Activated B cell treated with CpG ODN at 0.5 μM for 24 hours (primary cell): ENCODE measurements at regions of chr4 and their contacts with region 1.

Region 1: GRCh38 chr4:78824001-78824400 is 47.9 kb downstream of the BMP2K start:
- DNase-seq: no peak
- ATAC-seq: no peak
- H3K4me3 Mint-ChIP-seq: no peak overlapping the region
- H3K27ac Mint-ChIP-seq: peak overlapping the region; percentile 30
- H3K4me1 Mint-ChIP-seq: peaks cover 49% of the 10 kb centered on the region
- H3K27me3 Mint-ChIP-seq: no peaks in the 10 kb centered on the region
- CTCF ChIP-seq: no peak

Region 2: DNA sequence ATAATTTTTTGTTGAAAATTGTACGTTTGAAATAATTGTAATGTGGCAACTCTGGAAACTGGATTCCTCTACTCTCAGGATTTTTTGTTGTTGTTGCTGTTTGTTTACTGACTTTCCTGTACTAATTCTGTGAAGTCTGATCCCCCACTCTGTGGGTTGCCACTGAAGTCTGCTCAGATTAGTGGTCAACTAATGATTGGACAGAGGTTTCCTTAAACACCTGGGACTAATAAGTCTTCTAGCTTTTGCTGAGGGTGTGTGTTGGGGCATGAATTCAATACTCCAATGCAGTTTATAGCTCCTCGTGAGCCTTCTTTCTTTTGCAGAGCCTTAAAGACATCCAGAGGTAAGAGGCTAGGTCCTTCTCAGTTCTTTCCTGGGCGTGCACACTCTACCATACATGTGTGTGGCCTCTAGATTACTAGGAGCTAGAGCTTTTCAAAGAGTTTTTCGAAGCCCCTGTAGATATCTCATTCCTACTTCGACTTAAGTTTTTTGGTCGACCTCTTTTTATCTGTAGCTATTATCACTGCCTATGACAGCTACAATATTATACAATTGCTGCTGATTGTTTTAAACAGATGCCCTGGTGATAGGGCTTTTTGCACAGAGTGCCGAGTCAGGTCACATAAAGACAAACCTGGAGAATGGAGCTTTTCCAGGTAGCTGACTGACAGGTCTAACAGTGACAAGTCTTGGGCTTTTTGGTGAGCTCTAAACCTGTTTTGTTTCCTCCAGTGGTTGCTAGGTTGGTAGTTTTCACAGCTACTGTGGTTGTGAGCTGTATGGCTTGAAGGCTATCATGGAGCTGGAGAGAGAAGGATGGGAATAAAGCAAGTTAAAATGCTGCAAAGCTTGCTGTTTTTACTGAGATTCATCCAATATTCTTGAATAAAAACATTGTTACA is 13.8 kb before region 1 on chr4:
- CTCF ChIA-PET with region 1: no interaction called
- POLR2A ChIA-PET with region 1: no interaction called
- intact Hi-C with region 1: loop called (anchors 1 kb)
- DNase-seq: no peak
- ATAC-seq: no peak
- H3K4me3 Mint-ChIP-seq: no peak overlapping the region
- H3K27ac Mint-ChIP-seq: peak overlapping the region; percentile 5
- H3K4me1 Mint-ChIP-seq: peaks cover 67% of the 10 kb centered on the region
- H3K27me3 Mint-ChIP-seq: no peaks in the 10 kb centered on the region
- CTCF ChIP-seq: no peak